MCF 10A (cell line): ENCODE measurements at regions of chr1 and their contacts with region 1.

Region 1: GRCh38 chr1:70509996-70510876 is 99.2 kb downstream of the CTH start:
- DNase-seq: peak; percentile 88
- H3K4me3 Mint-ChIP-seq: no peak overlapping the region
- H3K27ac Mint-ChIP-seq: no peak overlapping the region
- H3K4me1 Mint-ChIP-seq: no peaks in the 10 kb centered on the region
- H3K27me3 Mint-ChIP-seq: peaks cover 17% of the 10 kb centered on the region
- CTCF ChIP-seq: peak; percentile 61

Region 2: GRCh38 chr1:70034403-70034802 is 475.8 kb before region 1 on chr1:
- CTCF ChIA-PET with region 1: no interaction called
- POLR2A ChIA-PET with region 1: no interaction called
- intact Hi-C with region 1: loop called (anchors 1 kb)
- DNase-seq: peak; percentile 52
- H3K4me3 Mint-ChIP-seq: no peak overlapping the region
- H3K27ac Mint-ChIP-seq: no peak overlapping the region
- H3K4me1 Mint-ChIP-seq: peaks cover 8% of the 10 kb centered on the region
- H3K27me3 Mint-ChIP-seq: peaks cover 67% of the 10 kb centered on the region
- CTCF ChIP-seq: peak; percentile 40

Region 3: DNA sequence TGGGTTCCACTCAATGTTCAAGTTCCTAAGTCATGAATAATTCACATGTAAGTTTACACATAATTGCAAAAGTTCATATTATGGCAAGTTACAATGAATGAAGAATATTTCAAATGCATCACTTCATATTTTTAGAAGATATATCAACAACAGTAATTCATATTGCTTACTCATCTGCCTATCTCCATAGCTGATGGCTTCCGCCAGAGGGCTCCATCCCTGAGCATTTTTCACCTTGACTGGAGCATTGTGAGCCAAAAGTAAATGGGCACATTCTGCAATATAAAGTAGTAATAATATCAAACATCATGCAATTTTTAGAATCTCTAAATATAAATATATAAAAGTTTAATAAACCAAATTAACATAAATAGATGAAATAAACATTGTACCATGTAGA is 185.6 kb before region 1 on chr1:
- CTCF ChIA-PET with region 1: interaction called, 3 read pairs
- POLR2A ChIA-PET with region 1: no interaction called
- intact Hi-C with region 1: loop called (anchors 1 kb)
- DNase-seq: peak; percentile 17
- H3K4me3 Mint-ChIP-seq: no peak overlapping the region
- H3K27ac Mint-ChIP-seq: no peak overlapping the region
- H3K4me1 Mint-ChIP-seq: peaks cover 13% of the 10 kb centered on the region
- H3K27me3 Mint-ChIP-seq: no peaks in the 10 kb centered on the region
- CTCF ChIP-seq: peak; percentile 11

Region 4: DNA sequence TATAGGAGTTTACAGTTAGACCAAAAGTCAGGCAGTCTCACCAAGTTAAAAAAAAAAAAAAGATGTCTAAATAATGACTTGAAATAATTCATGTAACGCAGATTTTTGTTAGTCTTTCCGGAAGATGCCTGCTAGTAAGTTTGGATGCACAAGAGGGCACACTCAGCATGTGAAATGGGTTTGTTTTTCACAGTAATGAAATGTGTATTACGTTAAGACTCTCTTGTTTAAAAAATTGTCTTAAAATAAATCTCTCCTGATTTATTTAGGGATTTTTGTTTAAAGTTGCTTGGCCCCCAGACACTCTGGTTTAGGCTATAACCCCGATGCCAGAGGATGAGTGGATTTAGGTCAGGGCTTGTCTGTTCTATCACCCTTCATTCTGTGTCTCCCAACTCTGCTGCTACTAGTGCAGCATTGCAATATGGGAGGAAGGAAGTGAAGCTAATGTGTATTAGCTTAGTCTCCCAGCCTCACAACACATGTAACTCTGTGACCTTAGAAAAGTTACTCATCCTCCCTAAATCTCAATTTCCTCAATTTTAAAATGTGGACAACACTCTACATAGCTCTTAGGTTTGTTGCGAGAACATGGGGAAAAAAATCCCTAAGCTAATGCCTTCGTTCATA is 73.5 kb before region 1 on chr1:
- CTCF ChIA-PET with region 1: interaction called, 3 read pairs
- POLR2A ChIA-PET with region 1: no interaction called
- intact Hi-C with region 1: loop called (anchors 1 kb)
- DNase-seq: no peak
- H3K4me3 Mint-ChIP-seq: no peak overlapping the region
- H3K27ac Mint-ChIP-seq: no peak overlapping the region
- H3K4me1 Mint-ChIP-seq: no peaks in the 10 kb centered on the region
- H3K27me3 Mint-ChIP-seq: no peaks in the 10 kb centered on the region
- CTCF ChIP-seq: no peak